ENCODE measurements at regions of chr15 and their contacts with region 1.

Region 1: DNA sequence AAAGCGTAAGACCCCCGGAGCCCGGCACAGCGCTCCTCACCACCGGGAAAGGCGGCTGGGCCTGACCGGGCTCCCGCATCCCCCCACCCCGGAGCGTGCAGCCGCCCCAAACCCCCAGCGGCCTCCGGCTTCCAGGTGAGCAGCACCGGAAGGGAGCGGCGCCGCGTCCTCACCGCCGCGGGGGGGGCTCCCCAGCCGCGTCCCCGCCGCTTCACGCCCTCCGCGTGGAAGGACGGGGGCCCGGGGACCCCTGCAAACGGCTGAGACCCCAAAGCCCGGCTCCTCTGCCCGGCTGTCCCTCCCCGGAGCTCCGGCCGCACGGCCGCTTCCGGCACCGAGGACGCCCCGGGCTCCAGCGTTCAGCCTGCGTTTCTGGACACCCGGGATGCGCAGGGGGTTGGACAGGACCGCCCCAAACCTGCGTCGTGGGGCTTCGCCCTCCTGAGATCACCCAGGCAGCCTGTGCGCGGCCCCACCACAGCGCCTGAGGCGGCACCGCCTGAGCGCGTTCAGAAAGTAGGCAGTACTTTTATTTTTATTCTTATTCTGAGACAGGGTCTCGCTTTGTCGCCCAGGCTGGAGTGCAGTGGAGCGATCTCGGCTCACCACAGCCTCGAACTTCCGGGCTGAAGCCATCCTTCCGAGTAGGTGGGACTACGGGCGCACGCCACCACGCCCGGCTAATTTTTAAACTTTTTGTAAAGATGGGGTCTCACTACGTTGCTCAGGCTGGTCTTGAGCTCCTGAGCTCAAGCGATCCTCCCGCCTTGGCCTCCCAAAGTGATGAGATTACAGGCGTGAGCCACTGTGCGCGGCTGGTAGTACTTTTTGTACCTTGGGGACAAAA is 51.6 kb upstream of the BLM start:
- DNase-seq: peak; percentile 85
- ATAC-seq: peak; percentile 79
- H3K4me3 Mint-ChIP-seq: peak overlapping the region; percentile 84
- H3K27ac Mint-ChIP-seq: peak overlapping the region; percentile 98
- H3K4me1 Mint-ChIP-seq: peaks cover 64% of the 10 kb centered on the region
- H3K27me3 Mint-ChIP-seq: peaks cover 1% of the 10 kb centered on the region

Region 2: GRCh38 chr15:90598031-90598577 is 67.4 kb before region 1 on chr15:
- CTCF ChIA-PET with region 1: no interaction called
- POLR2A ChIA-PET with region 1: no interaction called
- DNase-seq: peak; percentile 38
- ATAC-seq: peak; percentile 8
- H3K4me3 Mint-ChIP-seq: peak overlapping the region; percentile 46
- H3K27ac Mint-ChIP-seq: peak overlapping the region; percentile 93
- H3K4me1 Mint-ChIP-seq: peaks cover 80% of the 10 kb centered on the region
- H3K27me3 Mint-ChIP-seq: no peaks in the 10 kb centered on the region

Region 3: DNA sequence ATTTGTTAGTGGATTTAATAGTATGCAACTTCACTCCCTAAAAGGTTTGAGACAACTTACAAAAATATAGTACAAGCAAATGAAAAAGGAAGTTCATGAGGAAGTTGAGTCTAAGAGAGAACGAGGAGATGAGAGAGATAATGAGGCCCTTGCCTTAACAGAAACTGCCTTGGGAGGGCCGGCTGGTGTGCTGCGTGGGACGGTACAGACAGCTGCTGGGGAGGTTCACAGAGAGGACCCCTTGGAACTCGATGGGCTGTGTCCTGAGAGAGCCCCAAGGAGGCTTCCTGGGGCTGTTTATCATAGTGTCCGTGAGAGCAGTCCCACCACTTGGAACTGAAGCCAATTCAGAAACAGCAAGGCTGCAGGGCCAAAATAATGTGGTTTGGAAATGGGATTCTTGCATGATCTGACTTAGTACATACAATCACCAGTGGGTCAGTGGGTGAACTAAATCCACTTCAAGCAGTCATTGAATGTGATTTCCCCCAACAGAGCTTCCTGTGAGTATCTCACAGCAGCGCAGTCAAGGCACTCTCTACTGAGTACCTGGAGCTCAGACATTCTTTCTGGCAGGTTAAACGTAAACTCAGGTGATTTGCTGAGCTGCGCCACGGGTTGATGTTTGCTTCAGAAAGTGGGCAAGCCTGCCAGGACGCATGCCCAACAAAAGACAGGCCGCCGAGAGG is 45.0 kb before region 1 on chr15:
- CTCF ChIA-PET with region 1: no interaction called
- POLR2A ChIA-PET with region 1: no interaction called
- DNase-seq: peak; percentile 46
- ATAC-seq: peak; percentile 82
- H3K4me3 Mint-ChIP-seq: peak overlapping the region; percentile 27
- H3K27ac Mint-ChIP-seq: peak overlapping the region; percentile 85
- H3K4me1 Mint-ChIP-seq: peaks cover 22% of the 10 kb centered on the region
- H3K27me3 Mint-ChIP-seq: no peaks in the 10 kb centered on the region

Region 4: DNA sequence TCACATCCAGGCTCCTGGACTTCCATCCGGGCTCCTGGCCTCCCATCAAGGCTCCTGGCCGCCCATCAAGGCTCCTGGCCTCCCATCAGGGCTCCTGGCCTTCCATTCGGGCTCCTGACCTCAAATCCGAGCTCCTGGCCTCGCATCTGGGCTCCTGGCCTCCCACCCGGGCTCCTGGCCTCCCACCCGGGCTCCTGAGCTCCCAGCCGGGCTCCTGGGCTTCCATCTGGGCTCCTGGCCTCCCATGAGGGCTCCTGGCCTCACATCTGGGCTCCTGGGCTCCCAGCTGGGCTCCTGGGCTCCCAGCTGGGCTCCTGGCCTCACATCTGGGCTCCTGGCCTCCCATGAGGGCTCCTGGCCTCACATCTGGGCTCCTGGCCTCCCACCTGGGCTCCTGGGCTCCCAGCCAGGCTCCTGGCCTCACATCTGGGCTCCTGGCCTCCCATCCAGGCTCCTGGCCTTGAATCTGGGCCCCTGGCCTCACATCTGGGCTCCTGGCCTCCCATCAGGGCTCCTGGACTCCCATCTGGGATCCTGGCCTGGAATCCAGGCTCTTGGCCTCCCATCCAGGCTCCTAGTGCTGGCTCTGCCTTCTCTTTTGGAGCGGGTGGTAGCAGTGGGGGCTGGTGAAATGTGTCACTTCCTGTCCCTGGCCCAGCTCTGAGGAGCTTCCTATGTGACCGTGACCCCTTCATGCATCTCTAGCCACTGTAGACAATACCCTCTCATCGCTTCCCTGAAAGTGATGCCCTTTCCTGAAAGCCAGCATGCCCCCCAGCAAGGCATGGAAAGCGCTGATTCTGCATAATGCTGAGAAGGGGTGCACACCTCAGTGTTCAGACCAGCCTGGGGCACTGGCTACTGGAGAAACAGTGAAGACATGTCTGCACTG is 11.0 kb before region 1 on chr15:
- CTCF ChIA-PET with region 1: interaction called, 28 read pairs
- POLR2A ChIA-PET with region 1: interaction called, 17 read pairs
- DNase-seq: peak; percentile 64
- ATAC-seq: peak; percentile 50
- H3K4me3 Mint-ChIP-seq: peak overlapping the region; percentile 8
- H3K27ac Mint-ChIP-seq: peak overlapping the region; percentile 87
- H3K4me1 Mint-ChIP-seq: peaks cover 81% of the 10 kb centered on the region
- H3K27me3 Mint-ChIP-seq: no peaks in the 10 kb centered on the region

Region 5: DNA sequence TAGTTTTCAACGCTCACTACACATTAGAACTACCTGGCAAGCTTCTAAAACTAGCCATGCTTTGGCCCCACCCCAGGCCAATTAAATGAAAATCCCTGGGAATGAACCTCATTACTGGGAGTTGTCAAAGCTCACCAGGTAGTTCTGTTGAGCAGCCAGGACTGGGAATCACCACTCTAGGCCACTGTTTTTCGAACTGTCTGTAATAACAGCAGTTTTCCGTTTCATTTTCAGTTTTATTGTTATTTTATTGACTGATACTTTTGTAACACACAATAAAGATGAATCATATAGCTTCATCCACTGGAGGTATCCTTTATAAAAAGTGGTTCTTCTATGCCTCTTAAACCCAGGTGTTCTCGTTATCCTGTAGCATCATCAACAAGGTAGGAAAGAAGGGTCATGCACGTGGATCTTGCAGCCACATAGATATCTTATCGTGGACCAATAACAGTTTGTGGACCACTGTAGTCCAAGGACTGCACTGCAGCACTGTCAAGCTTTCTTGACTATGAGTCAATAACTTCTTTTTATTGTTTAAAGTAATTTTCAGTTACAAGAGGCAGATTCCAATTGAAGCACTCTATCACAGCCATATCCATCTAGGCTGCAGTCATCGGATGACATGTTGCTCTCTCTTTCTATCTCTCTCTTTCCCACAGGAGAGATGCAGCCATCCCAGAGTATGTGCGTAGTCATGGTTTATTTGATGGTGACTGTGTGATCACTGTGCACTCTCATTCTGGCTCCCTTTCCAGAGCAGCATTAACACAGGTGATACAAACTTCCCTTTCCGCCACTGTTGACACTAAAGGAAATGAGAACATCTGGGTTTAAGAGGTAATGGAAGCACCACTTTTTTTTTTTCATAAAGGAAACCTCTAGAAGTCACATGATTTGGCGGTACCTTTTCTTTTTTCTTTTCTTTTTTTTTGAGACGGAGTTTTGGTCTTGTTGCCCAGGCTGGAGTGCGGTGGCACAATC is 12.6 kb after region 1 on chr15:
- CTCF ChIA-PET with region 1: interaction called, 21 read pairs
- POLR2A ChIA-PET with region 1: interaction called, 20 read pairs
- DNase-seq: peak; percentile 42
- ATAC-seq: peak; percentile 81
- H3K4me3 Mint-ChIP-seq: peak overlapping the region; percentile 52
- H3K27ac Mint-ChIP-seq: peak overlapping the region; percentile 92
- H3K4me1 Mint-ChIP-seq: peaks cover 52% of the 10 kb centered on the region
- H3K27me3 Mint-ChIP-seq: peaks cover 3% of the 10 kb centered on the region

Region 6: DNA sequence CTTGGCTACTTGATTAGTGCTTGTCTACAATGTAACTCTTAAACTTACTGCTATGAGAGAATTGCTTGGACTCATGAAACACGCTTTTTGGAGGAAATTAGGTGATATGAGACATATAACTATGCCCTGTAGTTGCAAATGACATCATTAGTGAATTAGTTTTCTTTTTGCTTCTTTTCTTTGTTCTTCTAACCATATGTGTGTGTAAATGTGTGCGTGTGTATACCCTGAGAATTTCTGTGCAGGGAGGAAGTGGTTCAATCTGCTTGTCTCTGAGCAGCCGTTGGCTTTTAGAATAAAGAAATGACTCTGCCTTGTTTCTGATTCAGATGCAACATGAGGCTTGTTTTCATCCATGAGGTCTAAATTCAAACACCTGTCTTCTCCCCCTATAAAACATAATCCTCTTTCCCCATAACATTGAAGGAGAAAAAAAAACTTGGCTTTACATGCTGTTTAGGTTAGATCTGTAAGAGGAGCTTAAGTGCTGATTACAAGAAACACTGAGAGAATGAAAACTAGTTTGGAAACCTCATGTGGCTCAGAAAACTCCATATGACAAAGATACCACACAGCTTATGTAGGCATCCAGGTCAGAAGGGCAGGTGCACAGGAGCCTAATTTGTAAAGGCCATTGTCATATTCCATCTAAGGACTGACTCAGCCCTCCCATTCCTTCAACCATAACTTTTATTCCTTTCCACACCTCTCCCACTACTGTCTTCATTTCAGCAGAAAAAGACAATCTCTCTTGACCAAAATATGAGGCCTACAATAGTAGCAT is 21.1 kb after region 1 on chr15:
- CTCF ChIA-PET with region 1: interaction called, 6 read pairs
- POLR2A ChIA-PET with region 1: interaction called, 35 read pairs
- DNase-seq: peak; percentile 74
- ATAC-seq: peak; percentile 94
- H3K4me3 Mint-ChIP-seq: peak overlapping the region; percentile 47
- H3K27ac Mint-ChIP-seq: peak overlapping the region; percentile 98
- H3K4me1 Mint-ChIP-seq: peaks cover 60% of the 10 kb centered on the region
- H3K27me3 Mint-ChIP-seq: no peaks in the 10 kb centered on the region

Region 7: GRCh38 chr15:90716976-90717821 is 51.7 kb after region 1 on chr15 and contains the start of gene BLM:
- CTCF ChIA-PET with region 1: interaction called, 3 read pairs
- POLR2A ChIA-PET with region 1: interaction called, 20 read pairs
- DNase-seq: peak; percentile 97
- ATAC-seq: peak; percentile 99
- H3K4me3 Mint-ChIP-seq: peak within 1 kb of the TSS; percentile 81
- H3K27ac Mint-ChIP-seq: peak within 1 kb of the TSS; percentile 94
- H3K4me1 Mint-ChIP-seq: peaks cover 25% of the 10 kb centered on the region
- H3K27me3 Mint-ChIP-seq: no peaks in the 10 kb centered on the region
- total RNA-seq, gene BLM: 52.3 to 57.4 TPM